ENCODE measurements at regions of chr1 and their contacts with region 1.

Region 1: DNA sequence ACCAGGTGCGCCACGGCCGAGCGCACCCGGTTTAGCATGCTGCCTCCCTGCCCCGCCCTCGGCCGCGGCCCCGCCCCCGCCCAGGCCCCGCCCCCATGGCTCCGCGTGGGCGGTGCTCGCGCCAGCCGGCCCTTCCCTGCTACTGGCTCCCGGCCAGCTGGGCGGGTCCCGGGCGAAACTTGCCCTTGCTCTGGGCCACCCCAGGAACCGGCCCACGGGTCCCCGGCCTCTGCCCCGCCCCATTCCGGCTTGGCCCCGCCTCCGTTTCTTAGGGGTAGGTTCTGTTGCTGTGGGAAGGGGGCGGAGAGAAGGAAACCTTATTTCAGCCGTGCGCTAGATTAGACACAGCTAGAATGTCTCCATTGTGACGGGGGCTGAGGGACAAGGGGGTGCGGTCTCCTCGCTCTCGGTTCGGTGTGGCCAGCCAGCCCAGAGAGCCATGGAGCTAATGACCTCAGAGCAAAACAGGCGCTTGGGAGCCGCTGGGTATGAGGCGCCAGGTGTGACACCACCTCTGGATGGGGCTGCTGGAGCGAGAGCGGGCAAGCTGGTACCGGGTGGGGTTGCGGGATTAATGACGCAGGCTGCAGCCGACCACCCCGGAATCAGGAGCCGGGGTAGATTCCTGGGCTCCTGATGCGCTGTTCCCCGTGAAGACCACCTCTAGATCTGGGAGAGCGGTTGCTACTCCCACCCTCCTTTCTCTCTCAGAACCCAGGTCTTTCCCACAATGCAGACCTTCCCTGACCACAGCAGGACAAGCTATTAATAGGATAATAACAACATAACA is at the start of gene PPM1J:
- DNase-seq: peak; percentile 97
- H3K4me3 Mint-ChIP-seq: peak within 1 kb of the TSS; percentile 71
- H3K27ac Mint-ChIP-seq: no peak within 1 kb of the TSS
- H3K4me1 Mint-ChIP-seq: peaks cover 7% of the 10 kb centered on the region
- H3K27me3 Mint-ChIP-seq: peaks cover 21% of the 10 kb centered on the region
- CTCF ChIP-seq: no peak
- total RNA-seq, gene PPM1J: 1.3 and 2.2 TPM in 2 replicates

Region 2: DNA sequence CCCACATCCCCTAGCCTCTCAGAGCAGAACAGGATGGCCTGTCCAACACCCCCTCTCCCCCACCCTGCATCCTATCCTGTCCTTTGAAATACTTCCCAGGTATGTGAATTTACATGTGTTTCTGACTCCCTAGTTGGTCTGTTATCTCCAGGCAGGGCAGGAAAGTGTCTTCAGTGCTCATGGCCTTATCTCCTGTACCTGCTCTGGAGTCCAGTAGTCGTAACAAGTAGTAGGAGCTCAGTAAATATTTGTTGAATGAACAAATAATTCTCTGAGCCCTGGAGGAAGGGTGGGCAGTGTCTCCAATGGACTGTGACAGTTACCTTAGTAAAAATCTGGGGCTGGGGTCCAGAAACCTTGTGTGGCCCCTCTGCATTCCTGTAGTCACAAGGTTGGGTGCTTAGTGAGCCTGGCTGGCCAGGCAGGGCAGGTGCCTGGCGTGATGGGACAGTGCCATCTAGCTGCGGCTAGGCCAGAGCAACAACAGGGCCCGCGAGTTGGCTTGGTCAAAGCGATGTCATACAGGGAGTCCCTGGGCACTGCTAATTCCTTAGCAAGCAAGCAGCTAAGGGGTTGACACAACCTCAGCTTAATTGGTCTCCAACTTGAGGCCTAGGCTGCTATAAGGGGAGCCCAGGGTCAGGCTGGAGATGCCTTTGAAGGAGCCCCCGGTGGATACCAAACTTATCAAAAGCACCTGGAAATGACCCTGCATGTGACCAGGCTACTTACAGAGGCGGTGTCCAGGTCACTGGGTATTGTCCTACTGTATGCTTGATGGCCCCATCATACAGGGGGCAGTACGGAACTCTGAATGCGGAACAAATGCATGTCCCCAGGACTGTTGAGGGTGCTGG is 88.7 kb after region 1 on chr1:
- CTCF ChIA-PET with region 1: interaction called, 27 read pairs
- intact Hi-C with region 1: loop called (anchors 1 kb)
- DNase-seq: peak; percentile 72
- H3K4me3 Mint-ChIP-seq: no peak overlapping the region
- H3K27ac Mint-ChIP-seq: no peak overlapping the region
- H3K4me1 Mint-ChIP-seq: peaks cover 15% of the 10 kb centered on the region
- H3K27me3 Mint-ChIP-seq: no peaks in the 10 kb centered on the region
- CTCF ChIP-seq: peak; percentile 68

Region 3: GRCh38 chr1:113072757-113073478 is 357.5 kb after region 1 on chr1 and contains the start of gene LRIG2:
- CTCF ChIA-PET with region 1: interaction called, 18 read pairs
- intact Hi-C with region 1: no loop called
- DNase-seq: peak; percentile 96
- H3K4me3 Mint-ChIP-seq: peak within 1 kb of the TSS; percentile 87
- H3K27ac Mint-ChIP-seq: peak within 1 kb of the TSS; percentile 66
- H3K4me1 Mint-ChIP-seq: no peaks in the 10 kb centered on the region
- H3K27me3 Mint-ChIP-seq: no peaks in the 10 kb centered on the region
- CTCF ChIP-seq: peak; percentile 72
- total RNA-seq, gene LRIG2: 11.0 and 11.6 TPM in 2 replicates

Measured in Calu3 (cell line).